ENCODE measurements at regions of chr7 and their contacts with region 1.

Region 1: DNA sequence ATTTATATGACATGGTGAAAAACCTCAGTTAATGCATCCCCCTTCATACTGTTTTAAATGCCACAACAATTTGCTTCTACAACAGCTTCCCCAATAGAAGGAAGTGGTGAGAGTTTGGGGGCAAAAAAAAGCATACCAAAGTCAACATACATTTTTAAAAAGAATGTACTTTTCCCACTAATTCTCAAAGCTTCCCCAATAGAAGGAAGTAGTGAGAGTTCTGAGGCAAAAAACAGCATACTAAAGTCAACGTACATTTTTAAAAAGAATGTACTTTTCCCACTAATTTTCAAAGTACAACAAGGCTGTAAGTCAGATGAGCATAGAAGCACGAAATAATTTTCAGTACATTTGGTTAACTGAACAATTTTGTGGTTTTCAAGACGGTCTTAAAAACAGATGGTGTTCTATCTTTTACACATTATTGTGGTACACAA is 24.0 kb downstream of the WASL start:
- DNase-seq: no peak
- ATAC-seq: no peak
- H3K4me3 ChIP-seq: no peak overlapping the region
- H3K4me3 Mint-ChIP-seq: no peak overlapping the region
- H3K27ac ChIP-seq: no peak overlapping the region
- H3K27ac Mint-ChIP-seq: no peak overlapping the region
- H3K4me1 ChIP-seq: peaks cover 3 to 16% of the 10 kb centered on the region in 2 experiments
- H3K4me1 Mint-ChIP-seq: peaks cover 63 to 70% (median 65%) of the 10 kb centered on the region in 3 donors
- H3K27me3 ChIP-seq: no peaks in the 10 kb centered on the region
- H3K27me3 Mint-ChIP-seq: no peaks in the 10 kb centered on the region

Region 2: DNA sequence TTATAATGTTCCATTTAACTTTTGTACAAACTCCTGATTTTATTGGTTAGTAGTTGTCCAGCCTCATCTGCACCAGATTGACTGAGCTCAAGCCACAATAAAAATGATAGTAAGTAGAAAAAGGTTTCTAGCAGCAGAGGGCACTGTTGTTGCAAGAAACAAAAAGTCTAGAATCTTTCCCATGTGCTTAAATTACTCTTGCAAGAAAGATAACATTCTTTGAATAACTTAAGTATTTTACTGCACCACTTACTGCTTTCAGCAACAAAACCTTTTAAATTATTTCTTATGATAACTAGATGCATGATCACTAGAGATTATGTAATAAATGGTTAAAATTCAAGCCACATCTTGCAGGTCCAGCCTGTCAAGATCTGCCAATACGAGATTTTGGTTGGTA is 42.1 kb before region 1 on chr7:
- CTCF ChIA-PET with region 1: no interaction called
- POLR2A ChIA-PET with region 1: no interaction called
- DNase-seq: peak in 8 of 35 experiments; percentile 2 to 62 (median 9)
- ATAC-seq: no peak
- H3K4me3 ChIP-seq: no peak overlapping the region
- H3K4me3 Mint-ChIP-seq: no peak overlapping the region
- H3K27ac ChIP-seq: no peak overlapping the region
- H3K27ac Mint-ChIP-seq: no peak overlapping the region
- H3K4me1 ChIP-seq: no peaks in the 10 kb centered on the region
- H3K4me1 Mint-ChIP-seq: no peaks in the 10 kb centered on the region
- H3K27me3 ChIP-seq: no peaks in the 10 kb centered on the region
- H3K27me3 Mint-ChIP-seq: no peaks in the 10 kb centered on the region

Region 3: DNA sequence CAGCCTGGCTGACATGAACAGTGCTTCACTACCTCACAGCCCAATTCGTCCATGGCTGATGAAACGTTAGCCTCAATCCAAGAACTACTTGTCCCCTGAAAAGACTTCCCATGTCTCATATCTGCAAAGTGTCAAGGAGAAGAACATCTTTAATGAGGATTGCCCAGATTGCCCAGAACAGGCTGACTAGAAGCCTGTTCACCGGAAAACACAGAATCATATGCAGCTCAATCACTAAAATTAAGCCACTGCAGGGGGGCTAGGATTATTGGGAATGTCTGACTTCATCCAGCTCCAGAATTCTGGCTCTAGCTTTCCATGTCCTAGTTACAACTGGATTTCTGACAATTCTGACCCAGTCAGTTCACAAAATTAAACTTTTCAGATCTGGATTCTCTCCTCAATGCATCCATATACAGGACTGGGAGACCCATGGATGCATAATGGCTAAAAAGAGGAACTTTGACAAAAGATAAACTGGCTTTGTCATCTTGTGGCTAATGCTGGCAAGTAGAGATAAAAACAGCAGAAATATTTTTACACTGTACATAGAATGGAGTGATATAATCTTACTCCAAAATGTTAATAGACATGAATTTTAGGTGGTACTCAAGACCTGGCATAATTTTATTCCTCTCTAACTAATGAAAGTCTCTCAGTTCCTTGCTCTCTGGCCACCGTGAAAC is 1671.8 kb after region 1 on chr7:
- CTCF ChIA-PET with region 1: no interaction called
- POLR2A ChIA-PET with region 1: interaction called in 1 of 2 experiments, 12 read pairs
- DNase-seq: no peak
- ATAC-seq: no peak
- H3K4me3 ChIP-seq: no peak overlapping the region
- H3K4me3 Mint-ChIP-seq: no peak overlapping the region
- H3K27ac ChIP-seq: no peak overlapping the region
- H3K27ac Mint-ChIP-seq: no peak overlapping the region
- H3K4me1 ChIP-seq: no peaks in the 10 kb centered on the region
- H3K4me1 Mint-ChIP-seq: no peaks in the 10 kb centered on the region
- H3K27me3 ChIP-seq: no peaks in the 10 kb centered on the region
- H3K27me3 Mint-ChIP-seq: no peaks in the 10 kb centered on the region

Measured in T-cell (primary cell).